ENCODE measurements at regions of chr12 and their contacts with region 1.

Region 1: DNA sequence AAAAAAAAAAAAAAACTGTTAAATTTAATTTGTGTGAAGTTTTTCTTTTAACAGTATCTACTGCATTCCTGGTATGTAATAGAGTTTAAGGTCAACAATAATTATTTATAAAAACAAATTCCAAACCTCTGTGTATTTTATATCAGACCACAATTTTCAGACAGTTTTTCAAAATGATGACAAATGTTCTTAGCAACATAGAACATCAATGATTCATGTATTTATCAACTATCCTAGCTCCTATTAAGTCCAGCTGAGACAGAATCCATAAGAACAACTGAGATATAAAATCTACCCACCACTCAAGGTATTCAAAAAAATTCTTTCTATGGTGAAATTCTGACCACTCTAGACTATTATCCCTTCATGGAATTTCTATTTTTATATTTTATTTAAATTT is 144.5 kb downstream of the EPS8 start:
- DNase-seq: no peak
- ATAC-seq: no peak
- H3K4me3 ChIP-seq: no peak overlapping the region
- H3K27ac ChIP-seq: no peak overlapping the region
- H3K4me1 ChIP-seq: no peaks in the 10 kb centered on the region
- H3K27me3 ChIP-seq: no peaks in the 10 kb centered on the region

Region 2: GRCh38 chr12:15599266-15600037 is 45.2 kb before region 1 on chr12:
- intact Hi-C with region 1: no loop called
- DNase-seq: peak in 1 of 2 donors; percentile 46
- ATAC-seq: peak; percentile 61
- H3K4me3 ChIP-seq: no peak overlapping the region
- H3K27ac ChIP-seq: peak overlapping the region in 1 of 2 donors; percentile 57
- H3K4me1 ChIP-seq: peaks cover 0 to 3% of the 10 kb centered on the region in 2 donors
- H3K27me3 ChIP-seq: no peaks in the 10 kb centered on the region

Region 3: GRCh38 chr12:15688202-15688736 is 43.6 kb after region 1 on chr12:
- intact Hi-C with region 1: loop called in 1 of 2 experiments (anchors 5 kb)
- DNase-seq: peak; percentile 79 to 84
- ATAC-seq: peak; percentile 53
- H3K4me3 ChIP-seq: no peak overlapping the region
- H3K27ac ChIP-seq: peak overlapping the region in 1 of 2 donors; percentile 19
- H3K4me1 ChIP-seq: peaks cover 0 to 5% of the 10 kb centered on the region in 2 donors
- H3K27me3 ChIP-seq: no peaks in the 10 kb centered on the region

Measured in aorta (tissue), 5 donors.